Activated CD4-positive, alpha-beta T cell treated with anti-CD3 and anti-CD28 coated beads, Interleukin-2, amount 10 ng/mL, durations not matched to agents 7 days and 5 days (primary cell): ENCODE measurements at regions of chr12 and their contacts with region 1.

Region 1: GRCh38 chr12:49967042-49967776 is 5.5 kb downstream of the AQP5 start:
- DNase-seq: peak; percentile 92
- H3K4me3 Mint-ChIP-seq: peak overlapping the region; percentile 40
- H3K27ac Mint-ChIP-seq: no peak overlapping the region
- H3K4me1 Mint-ChIP-seq: peaks cover 6% of the 10 kb centered on the region
- H3K27me3 Mint-ChIP-seq: peaks cover 35% of the 10 kb centered on the region

Region 2: DNA sequence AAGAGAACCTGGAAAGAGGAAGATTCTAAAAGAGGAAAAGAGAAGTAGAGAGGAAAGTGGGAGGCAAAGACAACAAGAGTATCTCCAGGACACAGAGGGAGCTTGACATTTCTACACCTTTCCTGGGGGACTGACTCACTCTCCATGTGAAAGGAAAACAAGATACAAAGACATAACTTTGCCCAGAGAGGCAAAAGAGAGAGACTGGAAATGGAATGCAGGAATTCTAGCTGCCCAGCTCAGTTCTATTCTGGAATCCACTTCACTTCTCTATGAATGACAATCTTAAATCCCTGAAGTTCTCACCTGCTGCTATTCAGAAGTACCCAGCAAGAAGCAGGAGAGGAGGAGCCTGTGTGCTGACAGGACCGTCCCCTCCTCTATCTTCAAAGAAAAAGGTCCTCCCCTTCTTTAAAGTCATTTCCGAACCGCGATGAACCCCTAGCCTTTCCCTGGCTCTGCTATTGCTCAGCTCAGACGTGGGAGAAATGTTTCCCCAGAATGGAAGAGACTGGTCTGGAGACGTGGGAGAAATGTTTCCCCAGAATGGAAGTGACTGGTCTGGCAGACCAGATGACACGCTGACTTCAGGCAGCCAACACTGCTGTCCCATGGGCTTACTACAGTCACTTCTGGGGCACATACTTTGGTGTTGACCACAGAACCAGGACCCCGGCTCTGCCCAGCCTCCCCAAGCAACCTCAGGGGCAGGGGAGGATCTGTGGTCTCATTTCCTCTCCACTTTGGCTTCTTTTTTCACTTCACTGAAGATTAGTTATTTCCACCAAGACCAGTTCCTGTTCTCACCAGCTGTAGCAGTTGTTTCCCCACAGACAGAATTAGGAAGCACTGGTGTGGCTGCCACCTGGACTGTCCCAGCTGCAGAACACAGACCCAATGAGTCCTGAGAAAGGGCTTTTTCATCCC is 268.3 kb before region 1 on chr12:
- CTCF ChIA-PET with region 1: no interaction called
- POLR2A ChIA-PET with region 1: no interaction called
- DNase-seq: peak; percentile 34
- H3K4me3 Mint-ChIP-seq: peak overlapping the region; percentile 61
- H3K27ac Mint-ChIP-seq: peak overlapping the region; percentile 84
- H3K4me1 Mint-ChIP-seq: peaks cover 41% of the 10 kb centered on the region
- H3K27me3 Mint-ChIP-seq: no peaks in the 10 kb centered on the region

Region 3: GRCh38 chr12:49828133-49829091 is 138.8 kb before region 1 on chr12 and contains the start of gene NCKAP5L:
- CTCF ChIA-PET with region 1: no interaction called
- POLR2A ChIA-PET with region 1: no interaction called
- DNase-seq: peak; percentile 94
- H3K4me3 Mint-ChIP-seq: peak within 1 kb of the TSS; percentile 87
- H3K27ac Mint-ChIP-seq: peak within 1 kb of the TSS; percentile 90
- H3K4me1 Mint-ChIP-seq: peaks cover 24% of the 10 kb centered on the region
- H3K27me3 Mint-ChIP-seq: peaks cover 3% of the 10 kb centered on the region
- total RNA-seq, gene NCKAP5L: 4.0 to 4.5 TPM

Region 4: GRCh38 chr12:49945394-49946080 is 21.7 kb before region 1 on chr12:
- CTCF ChIA-PET with region 1: interaction called, 42 read pairs
- POLR2A ChIA-PET with region 1: no interaction called
- DNase-seq: peak; percentile 81
- H3K4me3 Mint-ChIP-seq: peak overlapping the region; percentile 69
- H3K27ac Mint-ChIP-seq: peak overlapping the region; percentile 89
- H3K4me1 Mint-ChIP-seq: peaks cover 28% of the 10 kb centered on the region
- H3K27me3 Mint-ChIP-seq: peaks cover 2% of the 10 kb centered on the region

Region 5: GRCh38 chr12:49990273-49990672 is 23.1 kb after region 1 on chr12:
- CTCF ChIA-PET with region 1: interaction called, 18 read pairs
- POLR2A ChIA-PET with region 1: interaction called, 3 read pairs
- DNase-seq: no peak
- H3K4me3 Mint-ChIP-seq: no peak overlapping the region
- H3K27ac Mint-ChIP-seq: no peak overlapping the region
- H3K4me1 Mint-ChIP-seq: no peaks in the 10 kb centered on the region
- H3K27me3 Mint-ChIP-seq: no peaks in the 10 kb centered on the region

Region 6: DNA sequence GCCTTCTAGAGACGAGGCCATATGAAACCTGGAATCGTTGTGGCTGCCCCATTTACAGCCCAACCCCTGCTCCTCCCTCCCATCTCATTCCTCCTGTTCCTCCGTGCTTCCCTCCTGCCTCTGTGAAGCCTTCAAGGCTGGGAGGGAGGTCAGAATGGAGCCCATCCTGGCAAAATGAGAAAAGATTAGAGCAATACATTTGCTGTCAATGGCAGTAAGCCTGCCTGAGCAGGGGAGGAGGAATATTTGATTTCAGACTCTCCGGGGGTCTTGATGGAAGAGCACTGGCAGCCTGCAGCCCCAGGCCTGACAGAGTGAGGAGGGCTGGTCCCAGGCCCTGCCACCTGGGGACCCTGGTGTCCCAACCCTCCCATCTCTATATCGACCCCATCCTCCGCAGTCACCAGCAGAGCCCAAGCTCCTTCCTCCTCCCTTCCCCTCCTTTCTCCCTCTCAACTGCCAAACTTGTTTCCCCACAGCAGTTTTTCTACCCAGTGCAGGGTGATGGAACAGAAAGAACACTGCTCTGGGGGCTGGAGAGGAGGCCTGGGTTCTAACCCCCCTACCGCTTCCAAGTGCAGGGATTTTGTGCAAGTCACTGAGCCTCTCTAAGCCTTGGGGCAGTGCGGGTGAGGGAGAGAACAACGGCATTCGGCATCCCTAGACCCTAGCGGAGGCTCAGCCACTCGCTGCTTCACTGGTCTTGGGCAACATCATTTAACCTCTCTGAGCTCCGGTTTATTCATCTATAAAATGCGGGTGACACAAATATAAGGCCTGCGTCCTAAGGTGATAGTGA is 74.1 kb after region 1 on chr12:
- CTCF ChIA-PET with region 1: interaction called, 27 read pairs
- POLR2A ChIA-PET with region 1: no interaction called
- DNase-seq: no peak
- H3K4me3 Mint-ChIP-seq: no peak overlapping the region
- H3K27ac Mint-ChIP-seq: no peak overlapping the region
- H3K4me1 Mint-ChIP-seq: peaks cover 5% of the 10 kb centered on the region
- H3K27me3 Mint-ChIP-seq: peaks cover 5% of the 10 kb centered on the region

Region 7: DNA sequence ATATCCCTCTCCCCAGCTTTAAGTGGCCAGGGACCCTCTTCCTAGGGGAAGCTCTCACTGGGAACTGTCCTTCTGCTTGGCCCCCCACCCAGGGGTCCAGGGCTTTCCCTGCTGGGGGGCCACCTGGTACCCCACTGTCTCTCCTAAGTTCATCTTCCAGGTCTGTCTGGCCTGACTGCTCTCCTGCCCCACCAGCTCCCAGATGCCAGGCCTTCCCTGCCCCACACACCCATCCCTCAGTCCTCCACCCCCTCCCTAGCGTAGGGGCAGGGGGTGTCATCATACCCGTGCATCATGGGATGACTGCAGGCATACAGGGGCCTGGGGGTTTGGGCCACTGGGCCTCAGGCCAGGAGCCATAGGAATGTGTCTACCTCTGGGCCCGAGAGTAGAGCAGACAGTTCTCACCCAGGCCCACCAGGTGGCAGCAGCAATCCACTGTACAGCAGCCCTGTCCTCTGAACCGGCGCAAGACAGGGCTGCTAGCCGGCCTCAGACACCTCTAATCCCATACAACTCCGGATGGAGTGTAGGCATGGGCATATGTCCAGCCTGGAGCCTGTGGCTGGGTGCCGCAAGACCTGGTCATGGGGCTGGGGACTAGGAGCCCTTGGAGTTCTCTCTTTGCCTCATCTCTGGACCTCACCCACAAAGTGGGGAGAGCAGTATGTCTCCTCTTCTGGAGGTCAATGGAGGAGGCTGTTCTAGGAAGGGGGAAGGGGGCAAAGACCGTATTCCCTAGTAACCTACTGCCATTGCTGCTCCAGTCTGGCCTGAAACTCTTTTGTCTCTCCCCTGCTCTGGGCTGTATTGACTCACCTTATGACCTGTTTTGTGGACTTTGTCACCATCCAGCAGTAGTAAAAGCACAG is 108.0 kb after region 1 on chr12:
- CTCF ChIA-PET with region 1: interaction called, 41 read pairs
- POLR2A ChIA-PET with region 1: no interaction called
- DNase-seq: peak; percentile 83
- H3K4me3 Mint-ChIP-seq: no peak overlapping the region
- H3K27ac Mint-ChIP-seq: peak overlapping the region; percentile 52
- H3K4me1 Mint-ChIP-seq: peaks cover 7% of the 10 kb centered on the region
- H3K27me3 Mint-ChIP-seq: no peaks in the 10 kb centered on the region

Region 8: DNA sequence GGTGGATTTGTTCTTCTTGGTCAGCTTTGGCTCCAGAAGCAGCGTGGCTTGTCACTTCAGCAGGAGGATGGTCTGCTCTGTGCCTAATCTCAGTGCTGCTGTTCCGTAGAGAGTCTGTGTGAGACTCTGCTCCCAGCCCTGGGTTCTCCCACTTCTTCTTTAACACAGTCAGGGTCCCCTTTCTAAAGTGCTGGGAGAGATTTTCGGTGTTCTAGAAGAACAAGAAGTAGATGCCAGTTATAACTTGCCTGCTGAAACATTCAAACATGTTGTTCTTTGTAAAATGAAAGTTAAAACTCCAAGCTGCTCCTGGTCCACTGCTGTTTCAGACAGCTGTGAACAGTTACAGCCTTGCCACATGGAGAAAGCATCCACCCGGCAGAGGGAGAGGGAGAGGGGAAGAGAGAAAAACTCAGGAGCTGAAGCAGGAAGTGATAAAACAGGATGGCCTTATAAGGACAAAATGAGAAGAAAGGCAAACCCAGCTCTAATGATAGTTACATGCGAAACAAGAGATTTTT is 255.1 kb after region 1 on chr12:
- CTCF ChIA-PET with region 1: no interaction called
- POLR2A ChIA-PET with region 1: no interaction called
- DNase-seq: peak; percentile 37
- H3K4me3 Mint-ChIP-seq: no peak overlapping the region
- H3K27ac Mint-ChIP-seq: no peak overlapping the region
- H3K4me1 Mint-ChIP-seq: peaks cover 34% of the 10 kb centered on the region
- H3K27me3 Mint-ChIP-seq: no peaks in the 10 kb centered on the region